ENCODE measurements at regions of chr9 and their contacts with region 1.

Region 1: DNA sequence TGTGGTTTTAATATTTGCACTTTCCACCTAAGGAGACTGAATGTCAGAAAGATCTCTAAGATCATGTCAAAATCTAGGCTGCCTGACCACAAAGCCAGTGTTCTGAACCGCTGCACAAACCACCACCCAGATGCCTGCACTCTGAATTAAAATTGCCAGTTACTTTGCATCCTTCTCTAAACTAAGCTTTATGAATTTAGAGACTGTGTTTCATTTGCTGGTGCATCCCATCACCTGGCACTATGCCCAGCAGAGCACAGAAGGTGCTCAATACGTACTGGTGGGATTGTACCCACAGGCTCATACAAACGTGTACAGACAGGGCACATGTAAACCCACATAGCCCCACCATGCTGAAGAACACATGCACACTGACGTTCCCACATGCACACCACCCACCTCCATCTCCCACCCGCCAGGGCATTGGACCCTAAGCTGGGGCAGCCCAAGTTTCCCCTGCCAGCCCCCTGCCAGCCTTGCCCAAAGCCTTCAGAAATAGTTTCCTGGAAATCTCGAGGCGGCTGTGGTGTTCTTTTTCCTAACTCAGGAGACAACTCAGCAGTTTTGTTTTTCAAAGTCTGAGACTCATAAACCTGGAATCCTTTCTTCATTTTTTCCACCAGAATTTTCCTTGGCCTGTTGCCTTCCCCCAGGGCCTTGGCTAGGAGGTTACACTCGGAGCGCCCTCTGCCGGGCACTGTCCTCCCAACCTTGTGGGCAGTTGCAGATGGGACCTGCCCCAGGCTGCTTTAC is 9.6 kb upstream of the TRAF1 start:
- DNase-seq: peak; percentile 72
- ATAC-seq: peak; percentile 93
- H3K4me3 ChIP-seq: no peak overlapping the region
- H3K27ac ChIP-seq: no peak overlapping the region; the same call in 1 of the 2 replicates
- H3K4me1 ChIP-seq: peaks cover 8% of the 10 kb centered on the region
- H3K27me3 ChIP-seq: no peaks in the 10 kb centered on the region
- CTCF ChIP-seq: peak; percentile 88

Region 2: GRCh38 chr9:120755827-120756434 is 180.3 kb before region 1 on chr9:
- CTCF ChIA-PET with region 1: no interaction called
- POLR2A ChIA-PET with region 1: no interaction called
- in situ Hi-C with region 1: no loop called
- intact Hi-C with region 1: loop called (anchors 2 kb)
- DNase-seq: peak; percentile 28
- ATAC-seq: peak; percentile 63; the same call in 1 of the 2 replicates
- H3K4me3 ChIP-seq: no peak overlapping the region
- H3K27ac ChIP-seq: no peak overlapping the region
- H3K4me1 ChIP-seq: no peaks in the 10 kb centered on the region; the same call in 1 of the 2 replicates
- H3K27me3 ChIP-seq: no peaks in the 10 kb centered on the region
- CTCF ChIP-seq: peak; percentile 81

Region 3: GRCh38 chr9:120868676-120869359 is 67.4 kb before region 1 on chr9:
- CTCF ChIA-PET with region 1: no interaction called
- POLR2A ChIA-PET with region 1: interaction called, 11 read pairs
- in situ Hi-C with region 1: no loop called
- intact Hi-C with region 1: no loop called
- DNase-seq: no peak
- ATAC-seq: peak; percentile 92
- H3K4me3 ChIP-seq: peak overlapping the region; percentile 34 to 50
- H3K27ac ChIP-seq: peak overlapping the region; percentile 76
- H3K4me1 ChIP-seq: peaks cover 22% of the 10 kb centered on the region
- H3K27me3 ChIP-seq: no peaks in the 10 kb centered on the region
- CTCF ChIP-seq: peak; percentile 77

Region 4: GRCh38 chr9:120901755-120902568 is 34.2 kb before region 1 on chr9:
- CTCF ChIA-PET with region 1: no interaction called
- POLR2A ChIA-PET with region 1: no interaction called
- in situ Hi-C with region 1: no loop called
- intact Hi-C with region 1: no loop called
- DNase-seq: no peak
- ATAC-seq: no peak
- H3K4me3 ChIP-seq: no peak overlapping the region
- H3K27ac ChIP-seq: no peak overlapping the region
- H3K4me1 ChIP-seq: no peaks in the 10 kb centered on the region
- H3K27me3 ChIP-seq: no peaks in the 10 kb centered on the region
- CTCF ChIP-seq: no peak